ENCODE measurements at regions of chr20 and their contacts with region 1.

Region 1: DNA sequence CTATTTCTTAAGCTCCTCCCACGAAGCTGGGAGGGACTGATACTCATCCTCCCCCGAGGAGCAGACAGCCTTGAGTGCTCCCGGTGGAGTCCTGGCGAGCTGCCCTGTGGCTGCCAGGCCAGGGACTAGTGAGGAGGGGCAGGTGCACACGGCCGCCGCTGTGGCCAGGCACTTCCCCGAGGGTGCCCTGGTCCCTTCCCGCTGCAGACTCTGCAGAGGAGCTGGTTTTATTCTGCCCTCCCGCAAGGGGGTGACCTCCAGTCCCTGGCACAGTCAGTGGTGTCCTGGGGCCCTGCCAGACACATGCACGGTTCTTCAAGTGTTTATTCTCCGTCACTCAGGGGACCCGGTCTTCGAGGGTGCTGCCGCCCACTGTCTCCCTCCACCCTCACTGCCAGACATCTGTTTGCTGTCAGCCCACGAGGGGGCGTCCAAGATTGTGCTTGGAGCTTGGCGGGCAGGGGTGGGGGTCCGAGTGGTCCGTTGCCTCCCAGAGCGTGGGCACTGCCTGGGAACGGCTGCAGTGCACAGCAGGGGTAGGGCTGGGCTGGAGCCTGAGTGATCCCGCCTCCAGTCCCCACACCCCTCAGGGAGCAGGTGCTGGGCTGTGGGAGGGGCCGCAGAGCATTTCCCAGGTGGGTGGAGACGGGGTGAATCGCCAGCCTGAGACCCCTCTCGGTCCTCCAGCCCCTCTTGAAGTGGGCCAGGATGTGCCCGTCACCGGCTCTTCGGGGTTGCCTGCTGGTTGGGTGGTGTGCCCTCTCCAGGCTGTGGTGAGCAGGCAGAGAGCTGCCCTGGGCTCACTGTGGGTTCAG is 3.1 kb upstream of the CABLES2 start:
- DNase-seq: peak; percentile 42
- ATAC-seq: peak; percentile 14; the same call in 2 of the 3 replicates
- H3K4me3 ChIP-seq: peak overlapping the region in 1 of 3 experiments; percentile 70; a peak in 1 of 6 replicates
- H3K27ac ChIP-seq: no peak overlapping the region
- H3K4me1 ChIP-seq: peaks cover 79% of the 10 kb centered on the region
- H3K27me3 ChIP-seq: peaks cover 12 to 32% of the 10 kb centered on the region in 2 experiments
- CTCF ChIP-seq: peak; percentile 96
- EP300 ChIP-seq: no peak
- POLR2A ChIP-seq: no peak
- RAD21 ChIP-seq: peak; percentile 61

Region 2: GRCh38 chr20:62302341-62303058 is 107.6 kb before region 1 on chr20 and contains the start of gene ADRM1:
- CTCF ChIA-PET with region 1: interaction called, 11 read pairs
- POLR2A ChIA-PET with region 1: interaction called, 3 read pairs
- in situ Hi-C with region 1: no loop called
- intact Hi-C with region 1: no loop called
- DNase-seq: peak; percentile 97
- ATAC-seq: peak; percentile 73
- H3K4me3 ChIP-seq: peak within 1 kb of the TSS; percentile 74 to 98 (median 93)
- H3K27ac ChIP-seq: peak within 1 kb of the TSS; percentile 97
- H3K4me1 ChIP-seq: peaks cover 50% of the 10 kb centered on the region
- H3K27me3 ChIP-seq: no peaks in the 10 kb centered on the region; a peak in 1 of 5 replicates
- CTCF ChIP-seq: peak; percentile 98
- EP300 ChIP-seq: peak; percentile 80 to 96; a peak in 3 of 4 replicates
- POLR2A ChIP-seq: peak in 1 of 2 experiments; percentile 70; a peak in 3 of 4 replicates
- RAD21 ChIP-seq: peak; percentile 94
- total RNA-seq, gene ADRM1: 143 and 154 TPM in 2 replicates

Region 3: DNA sequence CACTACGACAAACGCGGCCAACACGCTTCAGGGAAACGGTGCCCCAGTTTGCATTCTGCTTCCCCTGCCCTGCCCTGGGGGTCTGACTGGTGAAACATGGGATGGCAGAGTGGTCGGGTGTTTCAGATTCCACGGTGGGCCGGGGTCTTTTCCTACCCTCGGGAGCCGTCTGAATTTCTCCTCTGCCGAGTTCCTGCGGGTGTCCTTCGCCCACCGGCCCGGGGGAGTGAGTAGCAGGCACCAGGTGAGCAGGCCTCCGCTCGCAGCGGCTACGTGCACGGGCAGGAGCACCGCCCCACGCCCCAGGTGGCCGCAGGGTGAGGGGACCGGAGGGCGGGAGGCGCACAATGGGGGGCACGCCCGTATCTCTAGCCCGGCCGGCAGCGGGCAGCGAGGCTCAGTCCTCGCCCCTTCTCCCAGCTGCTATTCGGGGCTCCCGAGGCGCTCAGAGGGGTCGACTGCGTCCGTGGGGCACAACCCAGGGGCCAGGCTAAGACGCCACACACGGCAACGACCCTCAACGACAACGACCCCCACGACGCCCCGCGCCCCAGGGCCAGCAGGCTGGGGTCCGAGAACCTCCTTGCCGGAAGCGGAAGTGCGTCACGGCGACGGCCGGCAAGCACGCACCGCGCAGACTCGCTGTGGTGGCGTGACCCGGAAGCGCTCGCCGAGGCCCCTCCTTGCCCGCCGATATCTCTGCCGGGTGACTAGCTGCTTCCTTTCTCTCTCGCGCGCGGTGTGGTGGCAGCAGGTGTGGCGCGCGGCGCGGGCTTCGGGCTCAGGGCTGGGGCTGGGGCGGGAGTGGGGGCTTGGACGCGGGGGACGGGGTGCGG is 23.5 kb before region 1 on chr20 and contains the start of gene RPS21:
- CTCF ChIA-PET with region 1: no interaction called
- POLR2A ChIA-PET with region 1: interaction called, 31 read pairs
- in situ Hi-C with region 1: no loop called
- intact Hi-C with region 1: no loop called
- DNase-seq: peak; percentile 92
- ATAC-seq: peak; percentile 84
- H3K4me3 ChIP-seq: peak within 1 kb of the TSS; percentile 97 to 99 (median 99)
- H3K27ac ChIP-seq: peak within 1 kb of the TSS; percentile 66
- H3K4me1 ChIP-seq: peaks cover 36% of the 10 kb centered on the region
- H3K27me3 ChIP-seq: no peaks in the 10 kb centered on the region; a peak in 2 of 5 replicates
- CTCF ChIP-seq: peak; percentile 43; the same call in 1 of the 2 replicates
- EP300 ChIP-seq: peak; percentile 24 to 28; a peak in 1 of 4 replicates
- POLR2A ChIP-seq: peak; percentile 92 to 94
- RAD21 ChIP-seq: peak; percentile 68
- total RNA-seq, gene RPS21: 2,584 and 2,647 TPM in 2 replicates

Region 4: DNA sequence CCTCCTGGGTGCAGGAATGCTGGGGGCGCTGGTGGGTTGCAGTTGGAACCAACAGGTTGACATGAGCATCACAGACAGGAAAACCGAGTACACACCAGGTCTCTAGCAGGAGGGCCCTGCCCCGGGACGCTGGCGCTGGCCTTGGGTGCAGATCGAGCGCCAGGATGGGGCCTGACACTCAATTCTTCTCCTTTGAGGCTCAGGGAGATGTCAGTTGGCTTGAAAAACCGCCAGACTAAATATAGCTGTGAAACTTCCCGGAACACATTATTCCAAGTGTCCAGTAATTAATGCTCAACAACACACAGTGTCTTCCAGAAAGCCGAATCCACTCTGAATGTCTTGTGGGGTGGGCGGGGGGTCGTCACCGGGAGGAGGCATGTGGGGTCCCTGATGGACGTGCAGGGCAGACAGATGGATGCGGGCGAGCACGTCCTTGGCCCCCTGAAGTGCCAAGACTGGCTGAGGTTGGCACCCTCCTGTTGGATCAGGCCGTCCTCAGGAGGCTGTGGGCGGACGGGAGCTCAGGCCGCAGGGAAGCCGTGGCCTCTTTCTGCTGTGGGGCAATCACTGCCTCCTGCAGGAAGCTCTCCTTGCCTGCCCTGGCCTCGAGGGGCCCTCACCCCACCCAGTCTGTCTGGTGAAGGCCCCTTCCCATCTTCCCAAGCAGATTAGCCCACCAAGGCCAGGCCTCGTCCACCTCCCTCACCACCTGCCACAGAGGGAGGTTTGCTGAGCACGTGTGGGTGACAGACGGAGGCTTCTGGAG is 85.0 kb after region 1 on chr20:
- CTCF ChIA-PET with region 1: no interaction called
- POLR2A ChIA-PET with region 1: no interaction called
- in situ Hi-C with region 1: loop called (anchors 5 kb)
- intact Hi-C with region 1: no loop called
- DNase-seq: no peak
- ATAC-seq: no peak
- H3K4me3 ChIP-seq: no peak overlapping the region
- H3K27ac ChIP-seq: no peak overlapping the region
- H3K4me1 ChIP-seq: peaks cover under 1% of the 10 kb centered on the region; the same call in 1 of the 2 replicates
- H3K27me3 ChIP-seq: peaks cover 24 to 69% of the 10 kb centered on the region in 2 experiments
- CTCF ChIP-seq: no peak
- EP300 ChIP-seq: no peak
- POLR2A ChIP-seq: no peak
- RAD21 ChIP-seq: no peak

Region 5: DNA sequence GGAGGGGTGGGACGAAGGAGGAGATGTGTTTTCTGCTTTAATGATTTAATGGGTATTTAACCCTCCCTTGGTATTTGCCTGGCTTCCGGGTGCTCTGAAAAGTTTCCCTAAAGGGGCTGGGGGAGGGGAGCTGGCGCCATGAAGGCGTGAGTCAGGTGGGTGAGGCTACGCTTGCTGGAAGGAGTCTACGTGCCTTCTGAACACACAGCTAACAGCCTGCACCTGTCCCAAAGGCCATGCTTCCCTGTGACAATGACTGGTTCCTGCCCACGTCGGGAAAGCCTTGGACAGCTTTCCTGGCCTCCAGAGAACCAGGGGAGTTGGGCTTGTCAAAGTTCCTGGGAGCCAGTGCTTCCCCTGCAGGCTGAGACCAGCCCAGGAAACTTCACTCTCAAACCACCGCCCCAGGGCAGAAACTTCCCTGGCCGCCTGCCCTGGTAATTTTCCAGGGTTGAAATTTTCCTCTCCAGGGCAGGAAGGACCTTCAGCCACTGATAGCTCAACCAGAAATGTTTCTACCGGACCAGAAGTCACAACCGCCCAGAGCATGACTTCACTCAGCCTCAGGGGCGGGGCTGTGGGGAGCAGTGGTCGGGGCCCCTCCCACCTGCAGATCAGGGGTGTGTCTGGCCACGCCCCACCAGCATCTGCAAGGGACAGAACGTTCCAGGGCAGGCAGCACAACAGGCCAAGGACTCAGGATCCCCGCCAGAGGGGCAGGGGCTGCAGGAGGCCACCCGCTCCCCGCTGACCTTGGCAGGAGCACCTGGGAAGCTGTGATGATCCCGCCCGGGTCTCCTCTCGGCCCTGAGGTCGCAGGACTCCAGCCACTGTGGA is 213.6 kb after region 1 on chr20:
- CTCF ChIA-PET with region 1: no interaction called
- POLR2A ChIA-PET with region 1: interaction called, 10 read pairs
- in situ Hi-C with region 1: no loop called
- intact Hi-C with region 1: loop called (anchors 5 kb)
- DNase-seq: peak; percentile 98
- ATAC-seq: peak; percentile 87
- H3K4me3 ChIP-seq: peak overlapping the region; percentile 31 to 65 (median 37); a peak in 5 of 6 replicates
- H3K27ac ChIP-seq: peak overlapping the region; percentile 95
- H3K4me1 ChIP-seq: peaks cover 68% of the 10 kb centered on the region
- H3K27me3 ChIP-seq: peaks cover 2 to 8% of the 10 kb centered on the region in 2 experiments; a peak in 3 of 5 replicates
- CTCF ChIP-seq: peak; percentile 6; the same call in 1 of the 2 replicates
- EP300 ChIP-seq: peak; percentile 16 to 83; a peak in 3 of 4 replicates
- POLR2A ChIP-seq: peak in 1 of 2 experiments; percentile 82; a peak in 2 of 4 replicates
- RAD21 ChIP-seq: no peak

Region 6: DNA sequence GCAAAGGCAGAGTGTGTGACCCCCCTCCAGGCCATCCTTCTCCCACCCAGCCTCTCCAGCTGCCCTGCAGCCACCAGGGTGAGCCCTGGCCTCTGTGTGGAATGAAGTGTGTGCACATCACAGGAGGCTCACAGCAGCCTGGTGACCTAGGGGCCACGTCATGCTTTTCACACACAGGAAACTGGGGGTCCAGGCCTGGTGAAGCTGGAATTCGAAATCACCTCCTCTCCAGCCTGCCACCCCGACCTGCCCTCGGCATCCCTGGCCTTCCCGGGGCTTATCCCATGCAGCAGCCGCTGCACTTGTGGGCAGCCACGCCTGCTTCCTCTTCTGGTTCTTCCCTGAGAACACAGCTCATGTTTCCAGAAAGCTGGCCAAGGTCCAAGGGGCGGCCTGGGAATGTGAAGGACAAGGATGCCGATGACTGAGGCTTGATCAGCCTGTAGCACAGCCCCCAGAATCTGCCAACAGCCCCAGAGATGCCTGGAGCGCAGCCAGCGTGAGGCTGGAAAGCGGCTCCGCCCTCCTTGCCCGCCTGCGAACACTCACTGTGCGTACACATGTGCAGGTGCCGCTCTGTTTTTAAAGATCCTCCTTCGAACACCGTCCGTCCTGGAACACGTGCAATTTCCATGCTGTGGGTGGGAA is 294.3 kb after region 1 on chr20:
- CTCF ChIA-PET with region 1: no interaction called
- POLR2A ChIA-PET with region 1: no interaction called
- in situ Hi-C with region 1: no loop called
- intact Hi-C with region 1: no loop called
- DNase-seq: peak; percentile 67
- ATAC-seq: no peak; the same call in 2 of the 3 replicates
- H3K4me3 ChIP-seq: no peak overlapping the region
- H3K27ac ChIP-seq: no peak overlapping the region
- H3K4me1 ChIP-seq: peaks cover 8% of the 10 kb centered on the region; the same call in 1 of the 2 replicates
- H3K27me3 ChIP-seq: peaks cover 43 to 92% of the 10 kb centered on the region in 2 experiments
- CTCF ChIP-seq: no peak
- EP300 ChIP-seq: no peak
- POLR2A ChIP-seq: no peak
- RAD21 ChIP-seq: no peak